ENCODE measurements at regions of chr17 and their contacts with region 1.

Region 1: GRCh38 chr17:4920351-4921048 is 11.6 kb upstream of the GP1BA start:
- DNase-seq: no peak
- ATAC-seq: no peak
- H3K4me3 Mint-ChIP-seq: no peak overlapping the region
- H3K27ac Mint-ChIP-seq: no peak overlapping the region
- H3K4me1 Mint-ChIP-seq: no peaks in the 10 kb centered on the region
- H3K27me3 Mint-ChIP-seq: no peaks in the 10 kb centered on the region
- CTCF ChIP-seq: no peak

Region 2: DNA sequence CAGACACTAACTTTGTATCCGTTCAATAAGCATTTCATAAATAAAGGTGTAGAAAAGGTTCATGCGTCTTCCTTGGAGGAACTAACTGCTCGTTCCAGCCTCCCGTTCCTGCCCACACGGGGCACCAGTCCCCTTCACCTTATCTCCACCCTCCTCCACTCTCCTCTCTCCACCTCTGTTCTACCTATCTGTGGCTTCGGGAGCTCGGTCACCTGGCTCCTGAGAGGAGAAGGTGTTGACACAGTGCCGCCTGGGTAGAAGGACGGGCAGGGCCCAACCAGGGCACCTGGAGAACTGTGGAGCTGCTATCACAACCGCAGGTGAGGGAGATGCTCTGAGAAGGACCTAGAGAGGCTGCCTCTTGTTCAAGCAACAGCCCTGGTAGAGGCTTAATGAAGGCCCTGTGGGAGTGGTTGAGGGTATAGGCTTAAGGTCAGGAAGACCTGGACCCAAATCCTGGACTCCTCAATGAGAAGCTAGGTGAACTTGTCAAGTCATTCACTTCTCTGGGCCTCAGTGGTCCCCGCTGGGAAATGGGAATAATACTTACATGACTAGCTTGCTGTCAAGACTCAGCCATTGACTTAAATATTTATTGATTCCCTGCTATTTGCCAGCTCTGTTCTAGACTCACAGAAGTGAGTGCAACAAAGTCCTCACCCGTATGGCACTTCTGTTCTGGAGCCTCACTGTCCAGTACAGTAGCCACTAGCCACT is 97.0 kb before region 1 on chr17:
- CTCF ChIA-PET with region 1: no interaction called
- POLR2A ChIA-PET with region 1: no interaction called
- intact Hi-C with region 1: no loop called
- DNase-seq: no peak
- ATAC-seq: no peak
- H3K4me3 Mint-ChIP-seq: no peak overlapping the region
- H3K27ac Mint-ChIP-seq: no peak overlapping the region
- H3K4me1 Mint-ChIP-seq: no peaks in the 10 kb centered on the region
- H3K27me3 Mint-ChIP-seq: no peaks in the 10 kb centered on the region
- CTCF ChIP-seq: no peak

Region 3: DNA sequence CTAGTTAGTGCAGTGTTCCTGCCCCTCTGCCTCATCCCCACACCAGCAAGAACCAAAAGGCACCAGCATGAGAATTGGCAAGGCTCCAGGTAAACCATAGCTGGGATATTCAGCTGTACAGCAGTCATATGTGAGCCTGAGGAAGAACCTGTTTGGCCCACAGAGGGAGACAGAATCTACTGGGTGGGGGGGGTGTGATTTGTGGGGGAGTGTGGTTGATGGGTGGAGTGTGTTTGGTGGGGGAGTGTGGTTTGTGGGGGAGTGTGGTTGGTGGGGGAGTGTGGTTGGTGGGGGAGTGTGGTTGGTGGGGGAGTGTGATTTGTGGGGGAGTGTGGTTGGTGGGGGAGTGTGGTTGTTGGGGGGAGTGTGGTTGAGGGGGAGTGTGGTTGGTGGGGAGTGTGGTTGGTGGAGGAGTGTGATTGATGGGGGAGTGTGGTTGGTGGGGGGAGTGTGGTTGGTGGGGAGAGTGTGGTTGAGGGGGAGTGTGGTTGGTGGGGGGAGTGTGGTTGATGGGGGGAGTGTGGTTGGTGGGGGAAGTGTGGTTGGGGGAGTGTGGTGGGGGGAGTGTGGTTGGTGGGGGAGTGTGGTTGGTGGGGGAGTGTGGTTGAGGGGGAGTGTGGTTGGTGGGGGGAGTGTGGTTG is 67.8 kb before region 1 on chr17:
- CTCF ChIA-PET with region 1: no interaction called
- POLR2A ChIA-PET with region 1: no interaction called
- intact Hi-C with region 1: no loop called
- DNase-seq: peak; percentile 17
- ATAC-seq: no peak
- H3K4me3 Mint-ChIP-seq: no peak overlapping the region
- H3K27ac Mint-ChIP-seq: peak overlapping the region; percentile 21
- H3K4me1 Mint-ChIP-seq: peaks cover 21% of the 10 kb centered on the region
- H3K27me3 Mint-ChIP-seq: no peaks in the 10 kb centered on the region
- CTCF ChIP-seq: no peak

Region 4: DNA sequence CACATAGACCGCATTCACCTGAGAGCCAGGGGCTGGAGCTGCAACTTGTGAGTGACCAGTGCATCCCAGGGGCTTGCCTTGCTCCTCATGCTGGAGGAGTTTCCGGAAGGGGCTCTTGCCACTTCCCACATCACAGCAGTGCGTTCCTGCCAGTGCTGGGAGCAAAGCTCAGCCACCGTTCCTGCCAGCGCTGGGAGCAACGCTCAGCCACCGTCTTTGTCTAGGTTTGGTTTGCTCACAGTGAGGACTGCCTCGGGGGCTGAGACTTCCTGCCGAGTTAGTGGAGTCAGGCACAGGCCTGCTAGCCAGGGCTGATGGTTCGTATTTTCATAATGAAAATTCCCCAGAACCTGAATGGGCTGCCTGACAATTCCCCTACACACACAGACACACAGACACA is 12.2 kb before region 1 on chr17:
- CTCF ChIA-PET with region 1: interaction called, 19 read pairs
- POLR2A ChIA-PET with region 1: interaction called, 5 read pairs
- intact Hi-C with region 1: no loop called
- DNase-seq: peak; percentile 31
- ATAC-seq: peak; percentile 11
- H3K4me3 Mint-ChIP-seq: no peak overlapping the region
- H3K27ac Mint-ChIP-seq: no peak overlapping the region
- H3K4me1 Mint-ChIP-seq: peaks cover 12% of the 10 kb centered on the region
- H3K27me3 Mint-ChIP-seq: no peaks in the 10 kb centered on the region
- CTCF ChIP-seq: no peak